Transverse colon (tissue), 4 donors: ENCODE measurements at regions of chr11 and their contacts with region 1.

Region 1: GRCh38 chr11:92462821-92463220 is 238.2 kb downstream of the FAT3 start:
- DNase-seq: no peak
- H3K4me3 ChIP-seq: no peak overlapping the region
- H3K27ac ChIP-seq: no peak overlapping the region
- H3K4me1 ChIP-seq: no peaks in the 10 kb centered on the region
- H3K27me3 ChIP-seq: no peaks in the 10 kb centered on the region
- CTCF ChIP-seq: no peak
- EP300 ChIP-seq: no peak
- POLR2A ChIP-seq: no peak

Region 2: GRCh38 chr11:92505692-92506091 is 42.9 kb after region 1 on chr11:
- in situ Hi-C with region 1: no loop called
- intact Hi-C with region 1: loop called (anchors 2 kb)
- DNase-seq: no peak
- H3K4me3 ChIP-seq: no peak overlapping the region
- H3K27ac ChIP-seq: no peak overlapping the region
- H3K4me1 ChIP-seq: no peaks in the 10 kb centered on the region
- H3K27me3 ChIP-seq: no peaks in the 10 kb centered on the region
- CTCF ChIP-seq: no peak
- EP300 ChIP-seq: no peak
- POLR2A ChIP-seq: no peak